Right lobe of liver (tissue), 6 donors: ENCODE measurements at regions of chr19 and their contacts with region 1.

Region 1: DNA sequence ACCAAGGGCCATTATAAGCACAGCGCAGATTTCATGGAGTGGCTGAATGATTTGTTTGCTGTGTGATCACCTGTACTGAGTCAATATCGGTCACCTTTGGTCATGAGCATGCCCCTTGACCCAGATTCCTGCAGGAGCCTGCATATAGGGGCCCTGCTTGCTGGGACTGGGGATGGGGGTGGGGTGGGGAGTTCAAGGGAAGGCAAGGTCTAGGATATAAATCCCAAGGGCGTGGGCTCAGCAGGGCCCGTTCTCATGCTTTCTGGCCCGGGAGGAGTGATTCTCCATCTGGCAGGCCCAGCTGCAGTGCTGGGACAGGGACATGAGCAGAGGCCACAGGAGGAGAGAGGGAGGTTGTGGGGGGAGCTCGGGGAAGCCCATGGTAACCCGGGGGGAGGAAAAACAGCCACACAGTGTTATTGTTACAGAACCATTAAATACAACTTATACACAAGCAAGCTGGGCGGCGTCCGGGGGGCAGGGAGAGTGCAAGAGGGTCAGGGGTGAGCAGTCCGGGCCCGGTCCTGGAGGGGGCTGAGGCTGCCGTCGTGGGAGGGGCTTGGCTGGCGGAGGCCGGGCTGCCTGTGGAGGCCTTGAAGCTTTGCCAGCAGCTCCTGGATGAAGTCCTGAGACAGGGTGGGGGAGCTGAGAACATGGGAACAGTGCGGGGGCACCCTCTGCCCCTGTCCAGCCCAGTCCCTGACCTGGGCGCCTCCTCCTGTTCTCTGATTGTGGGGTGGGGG is 5.2 kb downstream of the PPP1R14A start:
- DNase-seq: peak; percentile 41 to 68 (median 64)
- ATAC-seq: peak; percentile 70 to 86 (median 79)
- H3K4me3 ChIP-seq: no peak overlapping the region
- H3K27ac ChIP-seq: peak overlapping the region in 2 of 3 donors; percentile 29 to 60
- H3K4me1 ChIP-seq: peaks cover 0 to 10% (median 0%) of the 10 kb centered on the region in 4 donors
- H3K27me3 ChIP-seq: no peaks in the 10 kb centered on the region
- CTCF ChIP-seq: no peak
- POLR2A ChIP-seq: no peak

Region 2: DNA sequence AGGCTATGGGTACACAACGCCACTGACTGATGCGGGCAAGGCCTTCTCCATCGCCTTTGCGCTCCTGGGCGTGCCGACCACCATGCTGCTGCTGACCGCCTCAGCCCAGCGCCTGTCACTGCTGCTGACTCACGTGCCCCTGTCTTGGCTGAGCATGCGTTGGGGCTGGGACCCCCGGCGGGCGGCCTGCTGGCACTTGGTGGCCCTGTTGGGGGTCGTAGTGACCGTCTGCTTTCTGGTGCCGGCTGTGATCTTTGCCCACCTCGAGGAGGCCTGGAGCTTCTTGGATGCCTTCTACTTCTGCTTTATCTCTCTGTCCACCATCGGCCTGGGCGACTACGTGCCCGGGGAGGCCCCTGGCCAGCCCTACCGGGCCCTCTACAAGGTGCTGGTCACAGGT is 75.6 kb after region 1 on chr19:
- intact Hi-C with region 1: loop called in 1 of 2 experiments (anchors 5 kb)
- DNase-seq: no peak
- ATAC-seq: no peak
- H3K4me3 ChIP-seq: no peak overlapping the region
- H3K27ac ChIP-seq: no peak overlapping the region
- H3K4me1 ChIP-seq: no peaks in the 10 kb centered on the region
- H3K27me3 ChIP-seq: no peaks in the 10 kb centered on the region
- CTCF ChIP-seq: no peak
- POLR2A ChIP-seq: no peak